Activated B cell treated with CpG ODN at 0.5 μM for 24 hours (primary cell): ENCODE measurements at regions of chr17 and their contacts with region 1.

Region 1: GRCh38 chr17:16380640-16381495 is at the start of gene UBB:
- DNase-seq: peak; percentile 83
- ATAC-seq: peak; percentile 90
- H3K4me3 Mint-ChIP-seq: peak within 1 kb of the TSS; percentile 97
- H3K27ac Mint-ChIP-seq: peak within 1 kb of the TSS; percentile 97
- H3K4me1 Mint-ChIP-seq: peaks cover 48% of the 10 kb centered on the region
- H3K27me3 Mint-ChIP-seq: no peaks in the 10 kb centered on the region
- CTCF ChIP-seq: no peak
- total RNA-seq, gene UBB: 1,031 and 1,128 TPM in 2 replicates

Region 2: DNA sequence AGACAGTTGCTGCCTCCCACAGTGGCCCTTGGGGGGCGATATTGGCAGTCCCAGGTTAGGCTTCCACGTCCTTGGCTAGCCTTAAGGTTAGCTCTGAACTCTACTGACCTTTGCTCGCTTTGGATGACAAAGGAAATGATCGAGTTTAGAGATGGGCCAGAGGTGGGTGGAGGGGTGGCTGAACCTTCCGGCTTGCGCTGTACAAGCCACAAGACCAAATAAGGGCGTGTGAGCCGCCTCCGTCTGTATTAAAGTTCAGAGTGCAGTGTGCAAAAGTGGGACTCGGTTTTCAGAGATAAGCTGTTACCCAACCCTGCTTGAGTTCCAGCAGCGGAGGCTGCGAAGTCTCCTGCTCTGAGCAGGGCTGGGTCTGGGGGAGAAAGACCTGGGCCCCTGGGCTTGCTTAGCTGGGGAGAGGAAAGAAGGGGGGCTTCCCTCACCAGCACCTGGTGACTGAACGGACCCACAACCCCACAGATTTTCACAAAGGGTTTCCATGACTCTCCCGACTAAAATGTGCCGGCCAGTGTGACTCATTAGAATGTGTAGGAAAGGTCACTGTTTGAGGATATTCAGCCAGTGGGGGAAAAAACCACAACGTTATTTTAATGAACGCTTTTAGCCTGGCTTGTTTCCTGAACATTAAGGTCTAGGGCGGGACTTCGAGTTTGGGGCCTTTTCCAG is 94.8 kb before region 1 on chr17:
- CTCF ChIA-PET with region 1: interaction called, 4 read pairs
- POLR2A ChIA-PET with region 1: interaction called, 33 read pairs
- intact Hi-C with region 1: loop called (anchors 1 kb)
- DNase-seq: peak; percentile 41
- ATAC-seq: peak; percentile 74
- H3K4me3 Mint-ChIP-seq: peak overlapping the region; percentile 82
- H3K27ac Mint-ChIP-seq: peak overlapping the region; percentile 99
- H3K4me1 Mint-ChIP-seq: peaks cover 64% of the 10 kb centered on the region
- H3K27me3 Mint-ChIP-seq: no peaks in the 10 kb centered on the region
- CTCF ChIP-seq: no peak

Region 3: DNA sequence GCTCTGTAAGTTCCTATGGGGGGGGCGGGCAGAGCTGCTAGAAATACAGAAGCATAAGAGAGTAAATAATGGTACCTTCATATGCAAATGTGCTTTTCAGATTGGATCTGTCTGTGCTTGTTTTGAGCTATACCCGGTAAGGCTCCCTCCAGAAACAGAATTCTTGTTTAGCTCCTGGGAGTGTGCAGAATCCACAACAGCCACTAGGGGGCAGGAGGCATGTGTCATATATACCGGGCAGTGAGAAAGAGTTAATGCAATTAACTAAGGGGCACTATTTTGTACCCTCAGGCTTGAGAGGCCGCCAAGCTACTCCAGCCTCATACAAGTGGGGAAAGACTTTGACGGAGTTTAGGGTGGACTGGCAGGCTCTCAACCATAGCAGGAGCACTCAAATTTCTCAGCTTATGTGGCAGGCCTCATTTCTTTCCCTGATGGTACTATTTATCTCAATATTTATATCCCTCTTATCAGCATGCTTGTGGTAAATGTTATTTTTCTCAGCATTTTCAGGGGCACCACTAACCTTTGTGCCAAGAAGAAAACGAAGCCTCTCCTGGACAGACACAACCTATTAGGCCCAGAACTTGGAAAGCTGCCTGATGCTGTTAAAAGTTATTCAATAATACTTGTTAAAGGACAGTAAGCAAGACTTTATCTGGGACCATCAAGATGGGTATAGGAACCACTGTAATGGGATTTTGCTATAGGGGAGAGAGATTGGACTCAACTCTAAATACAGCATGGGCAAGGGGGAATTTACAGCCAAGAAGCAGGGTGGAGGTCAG is 16.9 kb before region 1 on chr17:
- CTCF ChIA-PET with region 1: interaction called, 22 read pairs
- POLR2A ChIA-PET with region 1: interaction called, 20 read pairs
- intact Hi-C with region 1: loop called (anchors 1 kb)
- DNase-seq: peak; percentile 56
- ATAC-seq: peak; percentile 97
- H3K4me3 Mint-ChIP-seq: no peak overlapping the region
- H3K27ac Mint-ChIP-seq: no peak overlapping the region
- H3K4me1 Mint-ChIP-seq: peaks cover 4% of the 10 kb centered on the region
- H3K27me3 Mint-ChIP-seq: no peaks in the 10 kb centered on the region
- CTCF ChIP-seq: peak; percentile 95

Region 4: GRCh38 chr17:16453493-16453851 is 72.6 kb after region 1 on chr17:
- CTCF ChIA-PET with region 1: no interaction called
- POLR2A ChIA-PET with region 1: interaction called, 5 read pairs
- intact Hi-C with region 1: loop called (anchors 2 kb)
- DNase-seq: no peak
- ATAC-seq: no peak
- H3K4me3 Mint-ChIP-seq: no peak overlapping the region
- H3K27ac Mint-ChIP-seq: no peak overlapping the region
- H3K4me1 Mint-ChIP-seq: no peaks in the 10 kb centered on the region
- H3K27me3 Mint-ChIP-seq: no peaks in the 10 kb centered on the region
- CTCF ChIP-seq: no peak

Region 5: DNA sequence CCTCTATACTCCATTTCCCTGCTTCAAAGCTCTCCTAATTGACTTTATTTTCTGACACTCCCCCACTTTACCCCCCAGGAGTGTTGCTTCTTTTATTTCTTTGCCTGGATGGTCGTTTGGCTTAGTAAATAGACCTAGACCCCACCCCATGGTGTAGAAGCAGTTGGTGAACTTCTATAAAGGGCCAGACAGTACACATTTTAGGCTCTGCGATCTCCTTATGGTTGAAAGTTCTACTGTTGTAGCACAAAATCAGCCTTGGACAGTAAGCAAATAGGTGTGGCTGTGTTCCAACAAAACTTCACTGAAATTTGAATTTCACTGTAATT is 156.2 kb after region 1 on chr17:
- CTCF ChIA-PET with region 1: no interaction called
- POLR2A ChIA-PET with region 1: interaction called, 23 read pairs
- intact Hi-C with region 1: loop called (anchors 1 kb)
- DNase-seq: no peak
- ATAC-seq: no peak
- H3K4me3 Mint-ChIP-seq: peak overlapping the region; percentile 98
- H3K27ac Mint-ChIP-seq: peak overlapping the region; percentile 99
- H3K4me1 Mint-ChIP-seq: peaks cover 21% of the 10 kb centered on the region
- H3K27me3 Mint-ChIP-seq: no peaks in the 10 kb centered on the region
- CTCF ChIP-seq: no peak

Region 6: DNA sequence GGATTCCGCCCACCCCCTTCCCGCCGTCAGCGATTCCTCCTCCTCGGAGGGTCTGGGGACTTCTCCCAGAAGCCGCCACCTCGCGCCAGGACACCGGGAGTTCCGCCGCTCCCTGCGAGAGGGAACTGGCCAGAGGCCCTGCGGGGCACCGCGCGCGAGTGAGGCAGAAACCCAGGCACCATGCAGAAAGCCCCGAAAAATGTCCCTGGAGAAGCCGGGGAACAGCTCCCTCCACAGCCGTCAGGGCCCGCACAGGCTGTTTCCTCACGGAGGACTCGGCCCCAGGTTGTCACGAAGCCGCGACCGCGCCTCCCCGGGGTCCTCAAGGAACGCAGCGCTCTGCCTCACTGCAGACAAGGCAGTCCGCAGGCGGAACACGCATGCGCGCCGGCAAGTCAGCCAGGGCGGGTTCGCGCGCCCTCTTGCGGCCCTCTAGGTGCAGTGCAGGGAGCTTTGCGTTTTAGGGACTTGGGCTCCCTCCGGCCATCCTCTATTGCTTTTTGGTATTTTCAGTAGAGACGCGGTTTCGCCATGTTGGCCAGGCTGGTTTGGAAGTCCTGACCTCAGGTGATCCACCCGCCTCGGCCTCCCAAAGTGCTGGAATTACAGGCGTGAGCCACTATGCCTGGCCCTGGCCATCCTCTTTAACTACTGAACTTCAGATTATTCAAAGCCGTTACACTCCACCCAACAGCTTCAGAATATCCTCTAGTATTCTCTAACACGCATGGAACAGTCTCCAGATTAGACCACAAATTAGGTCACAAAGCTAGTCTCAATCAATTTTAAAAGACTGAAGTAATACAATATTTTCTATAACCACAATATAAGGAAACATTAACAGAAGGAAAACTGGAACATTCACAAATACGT is 208.5 kb after region 1 on chr17:
- CTCF ChIA-PET with region 1: no interaction called
- POLR2A ChIA-PET with region 1: interaction called, 4 read pairs
- intact Hi-C with region 1: loop called (anchors 5 kb)
- DNase-seq: peak; percentile 89
- ATAC-seq: peak; percentile 97
- H3K4me3 Mint-ChIP-seq: peak overlapping the region; percentile 74
- H3K27ac Mint-ChIP-seq: no peak overlapping the region
- H3K4me1 Mint-ChIP-seq: peaks cover 5% of the 10 kb centered on the region
- H3K27me3 Mint-ChIP-seq: peaks cover 40% of the 10 kb centered on the region
- CTCF ChIP-seq: peak; percentile 75